SK-N-SH (cell line): ENCODE measurements at regions of chr6 and their contacts with region 1.

Region 1: GRCh38 chr6:31795616-31796298 is at the start of gene VARS1:
- DNase-seq: peak; percentile 98
- H3K4me3 ChIP-seq: peak within 1 kb of the TSS; percentile 80 to 82
- H3K27ac ChIP-seq: peak within 1 kb of the TSS; percentile 72 to 96
- H3K4me1 ChIP-seq: peaks cover 3 to 12% of the 10 kb centered on the region in 2 experiments; a peak in 3 of 4 replicates
- H3K27me3 ChIP-seq: no peaks in the 10 kb centered on the region
- CTCF ChIP-seq: peak; percentile 66
- EP300 ChIP-seq: no peak
- RAD21 ChIP-seq: peak; percentile 53
- polyA plus RNA-seq, gene VARS1: 22.2 and 35.1 TPM in 2 replicates

Region 2: DNA sequence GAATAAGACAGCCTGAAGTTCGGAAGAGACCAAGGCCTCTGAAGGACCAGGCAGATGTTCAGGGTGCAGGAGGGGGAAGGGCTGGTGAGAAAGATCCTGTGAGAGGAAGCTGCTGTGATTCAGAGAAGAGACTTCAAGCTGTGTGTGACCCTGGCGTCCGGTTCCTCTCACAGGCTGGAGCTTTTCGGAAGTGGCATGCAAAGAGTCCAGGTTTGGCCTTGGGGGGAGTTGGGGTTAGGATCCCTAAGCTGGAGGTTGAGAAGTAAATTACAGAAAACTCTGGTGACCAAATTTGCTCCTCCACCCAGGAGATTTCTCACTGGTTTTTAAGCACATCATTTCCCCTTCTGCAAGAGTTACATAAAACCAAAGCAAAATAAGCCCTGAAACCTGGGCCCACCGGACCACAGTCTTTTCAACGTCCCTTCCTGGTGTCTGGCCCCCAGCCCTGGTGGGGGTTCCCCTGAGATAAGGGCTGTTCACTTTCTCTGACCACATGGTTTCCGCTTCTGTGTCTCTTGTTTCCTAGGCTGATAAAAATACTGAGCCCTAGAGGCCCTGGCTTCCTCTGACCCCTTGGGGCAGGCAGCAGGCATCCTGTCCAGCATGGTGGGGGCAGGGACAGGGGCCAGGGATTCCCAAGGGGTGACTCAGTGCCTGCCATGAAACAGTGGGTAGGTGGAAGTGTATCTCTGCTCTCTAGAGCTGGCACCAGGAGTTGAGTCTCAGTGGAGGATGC is 235.6 kb before region 1 on chr6:
- CTCF ChIA-PET with region 1: no interaction called
- POLR2A ChIA-PET with region 1: no interaction called
- DNase-seq: no peak
- H3K4me3 ChIP-seq: no peak overlapping the region
- H3K27ac ChIP-seq: peak overlapping the region; percentile 14 to 77; a peak in 3 of 4 replicates
- H3K4me1 ChIP-seq: peaks cover 0 to 20% of the 10 kb centered on the region in 2 experiments; a peak in 3 of 4 replicates
- H3K27me3 ChIP-seq: no peaks in the 10 kb centered on the region
- CTCF ChIP-seq: no peak
- EP300 ChIP-seq: peak in 1 of 2 experiments; percentile 20; a peak in 1 of 4 replicates
- RAD21 ChIP-seq: no peak

Region 3: GRCh38 chr6:31639449-31639861 is 156.3 kb before region 1 on chr6:
- CTCF ChIA-PET with region 1: no interaction called
- POLR2A ChIA-PET with region 1: no interaction called
- DNase-seq: no peak
- H3K4me3 ChIP-seq: no peak overlapping the region
- H3K27ac ChIP-seq: peak overlapping the region in 1 of 2 experiments; percentile 65; a peak in 2 of 4 replicates
- H3K4me1 ChIP-seq: no peaks in the 10 kb centered on the region
- H3K27me3 ChIP-seq: no peaks in the 10 kb centered on the region
- CTCF ChIP-seq: no peak
- EP300 ChIP-seq: no peak
- RAD21 ChIP-seq: no peak

Region 4: GRCh38 chr6:31739639-31740396 is 55.9 kb before region 1 on chr6 and contains the start of gene MSH5:
- CTCF ChIA-PET with region 1: interaction called, 10 read pairs
- POLR2A ChIA-PET with region 1: interaction called, 5 read pairs
- DNase-seq: peak; percentile 95
- H3K4me3 ChIP-seq: peak within 1 kb of the TSS; percentile 77 to 83
- H3K27ac ChIP-seq: peak within 1 kb of the TSS; percentile 75 to 88
- H3K4me1 ChIP-seq: peaks cover 15 to 24% of the 10 kb centered on the region in 2 experiments; a peak in 3 of 4 replicates
- H3K27me3 ChIP-seq: no peaks in the 10 kb centered on the region
- CTCF ChIP-seq: no peak
- EP300 ChIP-seq: no peak
- RAD21 ChIP-seq: no peak
- polyA plus RNA-seq, gene MSH5: 16.0 and 19.5 TPM in 2 replicates

Region 5: DNA sequence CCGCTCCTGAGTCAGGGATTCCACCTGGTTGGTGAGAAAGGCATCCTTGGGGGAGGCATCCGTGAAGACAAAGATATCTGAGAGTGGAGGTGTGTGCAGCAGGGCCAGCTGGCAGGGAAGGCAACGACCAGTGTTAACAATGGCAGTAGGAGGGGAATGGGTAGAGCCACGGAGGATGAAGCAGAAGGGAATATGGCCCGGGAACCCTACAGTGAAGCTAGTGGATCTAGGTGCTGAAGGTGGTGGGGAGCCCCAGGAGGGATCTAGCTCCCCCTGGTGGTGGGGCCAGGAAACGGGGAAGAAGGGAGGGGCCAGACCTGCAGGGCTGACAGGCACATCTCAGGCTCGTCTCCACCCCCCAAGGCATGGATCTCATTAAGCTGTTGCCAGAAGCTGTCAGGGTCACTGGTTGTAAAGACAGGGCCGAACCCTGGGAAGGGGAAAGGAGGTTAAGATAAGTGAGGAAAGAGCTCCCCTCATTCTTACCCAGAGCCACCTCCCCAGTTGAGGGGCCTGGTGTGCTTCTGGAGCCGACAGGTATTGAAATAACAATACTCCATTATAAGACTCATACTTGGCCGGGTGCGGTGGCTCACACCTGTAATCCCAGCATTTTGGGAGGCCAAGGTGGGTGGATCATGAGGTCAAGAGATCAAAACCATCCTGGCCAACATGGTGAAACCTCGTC is 25.9 kb before region 1 on chr6:
- CTCF ChIA-PET with region 1: interaction called, 62 read pairs
- POLR2A ChIA-PET with region 1: interaction called, 3 read pairs
- DNase-seq: peak; percentile 72
- H3K4me3 ChIP-seq: no peak overlapping the region
- H3K27ac ChIP-seq: no peak overlapping the region
- H3K4me1 ChIP-seq: peaks cover 0 to 8% of the 10 kb centered on the region in 2 experiments; a peak in 1 of 4 replicates
- H3K27me3 ChIP-seq: no peaks in the 10 kb centered on the region
- CTCF ChIP-seq: peak; percentile 66
- EP300 ChIP-seq: no peak
- RAD21 ChIP-seq: peak; percentile 20; the same call in 1 of the 2 replicates

Region 6: GRCh38 chr6:31776989-31777666 is 18.6 kb before region 1 on chr6 and contains the start of gene VWA7:
- CTCF ChIA-PET with region 1: interaction called, 62 read pairs
- POLR2A ChIA-PET with region 1: interaction called, 3 read pairs
- DNase-seq: peak; percentile 71
- H3K4me3 ChIP-seq: no peak within 1 kb of the TSS
- H3K27ac ChIP-seq: no peak within 1 kb of the TSS; a peak in 2 of 4 replicates
- H3K4me1 ChIP-seq: peaks cover 9 to 10% of the 10 kb centered on the region in 2 experiments; a peak in 2 of 4 replicates
- H3K27me3 ChIP-seq: no peaks in the 10 kb centered on the region
- CTCF ChIP-seq: no peak
- EP300 ChIP-seq: peak in 1 of 2 experiments; percentile 14; a peak in 1 of 4 replicates
- RAD21 ChIP-seq: no peak
- polyA plus RNA-seq, gene VWA7: 0.45 and 0.56 TPM in 2 replicates

Region 7: DNA sequence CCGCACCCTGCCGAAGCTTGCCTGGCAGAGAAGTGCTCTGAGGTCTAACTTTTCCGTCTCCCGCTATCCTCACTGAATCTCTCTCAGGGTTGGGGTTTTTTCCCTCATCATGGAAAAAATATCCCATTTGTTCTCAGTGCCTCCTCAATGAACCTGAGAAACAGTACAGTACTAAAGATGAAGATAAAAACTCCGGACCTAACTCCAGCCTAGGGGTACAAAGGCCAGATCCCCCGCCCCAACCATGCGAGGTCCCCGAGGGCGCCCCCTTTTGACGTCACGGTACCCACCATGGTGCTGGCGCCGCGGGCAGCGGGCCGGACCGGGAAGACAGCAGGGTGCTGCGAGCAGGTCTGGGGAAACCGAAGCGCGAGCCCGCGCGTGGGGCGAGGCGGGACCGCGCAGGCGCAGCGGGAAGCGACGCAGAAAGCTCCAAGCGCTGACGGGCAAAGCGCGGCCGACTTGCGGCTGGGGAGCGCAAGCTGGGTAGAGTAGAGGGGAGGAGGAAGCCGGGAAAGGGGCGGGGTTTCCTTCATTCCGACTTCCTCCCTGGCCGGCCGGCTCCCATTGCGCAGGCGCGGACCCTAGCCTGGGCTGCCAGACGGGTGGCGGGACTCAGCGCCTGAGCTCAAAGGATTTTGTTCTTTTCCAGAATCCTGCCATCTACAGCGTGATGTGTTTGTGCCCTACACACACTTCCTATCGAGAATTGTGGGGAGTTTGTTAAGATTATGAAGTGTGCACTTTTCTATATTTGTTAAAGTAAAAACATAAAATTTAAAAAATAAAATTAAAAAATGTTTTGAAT is 10.9 kb after region 1 on chr6 and contains the start of gene LSM2:
- CTCF ChIA-PET with region 1: interaction called, 37 read pairs
- POLR2A ChIA-PET with region 1: interaction called, 24 read pairs
- DNase-seq: peak; percentile 99
- H3K4me3 ChIP-seq: peak within 1 kb of the TSS; percentile 64 to 73
- H3K27ac ChIP-seq: peak within 1 kb of the TSS; percentile 79 to 80
- H3K4me1 ChIP-seq: peaks cover 5% of the 10 kb centered on the region in 2 experiments; a peak in 2 of 4 replicates
- H3K27me3 ChIP-seq: no peaks in the 10 kb centered on the region
- CTCF ChIP-seq: peak; percentile 46
- EP300 ChIP-seq: no peak
- RAD21 ChIP-seq: no peak
- polyA plus RNA-seq, gene LSM2: 47.8 and 79.1 TPM in 2 replicates

Region 8: DNA sequence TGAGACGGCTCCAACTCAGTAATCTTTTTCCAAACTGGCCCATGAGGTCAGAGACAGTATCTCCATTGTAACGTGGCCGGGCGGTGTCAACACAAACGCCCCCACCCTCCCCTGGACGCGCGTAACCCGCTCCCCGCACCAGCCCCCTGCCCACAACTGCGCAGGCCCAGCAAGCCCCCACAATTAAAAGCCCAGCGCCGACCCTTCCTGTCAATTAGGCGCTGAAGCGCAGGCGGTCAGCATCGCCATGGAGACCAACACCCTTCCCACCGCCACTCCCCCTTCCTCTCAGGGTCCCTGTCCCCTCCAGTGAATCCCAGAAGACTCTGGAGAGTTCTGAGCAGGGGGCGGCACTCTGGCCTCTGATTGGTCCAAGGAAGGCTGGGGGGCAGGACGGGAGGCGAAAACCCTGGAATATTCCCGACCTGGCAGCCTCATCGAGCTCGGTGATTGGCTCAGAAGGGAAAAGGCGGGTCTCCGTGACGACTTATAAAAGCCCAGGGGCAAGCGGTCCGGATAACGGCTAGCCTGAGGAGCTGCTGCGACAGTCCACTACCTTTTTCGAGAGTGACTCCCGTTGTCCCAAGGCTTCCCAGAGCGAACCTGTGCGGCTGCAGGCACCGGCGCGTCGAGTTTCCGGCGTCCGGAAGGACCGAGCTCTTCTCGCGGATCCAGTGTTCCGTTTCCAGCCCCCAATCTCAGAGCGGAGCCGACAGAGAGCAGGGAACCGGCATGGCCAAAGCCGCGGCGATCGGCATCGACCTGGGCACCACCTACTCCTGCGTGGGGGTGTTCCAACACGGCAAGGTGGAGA is 19.5 kb after region 1 on chr6 and contains the starts of genes HSPA1A and HSPA1L:
- CTCF ChIA-PET with region 1: interaction called, 13 read pairs
- POLR2A ChIA-PET with region 1: interaction called, 7 read pairs
- DNase-seq: peak; percentile 94
- H3K4me3 ChIP-seq: peak within 1 kb of the TSS; percentile 62 to 79
- H3K27ac ChIP-seq: peak within 1 kb of the TSS; percentile 98
- H3K4me1 ChIP-seq: peaks cover 4 to 6% of the 10 kb centered on the region in 2 experiments; a peak in 2 of 4 replicates
- H3K27me3 ChIP-seq: no peaks in the 10 kb centered on the region
- CTCF ChIP-seq: no peak
- EP300 ChIP-seq: peak in 1 of 2 experiments; percentile 98; a peak in 2 of 4 replicates
- RAD21 ChIP-seq: no peak
- polyA plus RNA-seq, gene HSPA1A: 71.1 and 119 TPM in 2 replicates
- polyA plus RNA-seq, gene HSPA1L: 0.69 and 0.83 TPM in 2 replicates

Region 9: GRCh38 chr6:31827286-31828079 is 31.7 kb after region 1 on chr6 and contains the start of gene HSPA1B:
- CTCF ChIA-PET with region 1: interaction called, 15 read pairs
- POLR2A ChIA-PET with region 1: interaction called, 5 read pairs
- DNase-seq: peak; percentile 87
- H3K4me3 ChIP-seq: peak within 1 kb of the TSS; percentile 54 to 62
- H3K27ac ChIP-seq: peak within 1 kb of the TSS; percentile 86 to 90
- H3K4me1 ChIP-seq: peaks cover 7 to 10% of the 10 kb centered on the region in 2 experiments; a peak in 2 of 4 replicates
- H3K27me3 ChIP-seq: no peaks in the 10 kb centered on the region
- CTCF ChIP-seq: no peak
- EP300 ChIP-seq: peak in 1 of 2 experiments; percentile 91; a peak in 2 of 4 replicates
- RAD21 ChIP-seq: no peak
- polyA plus RNA-seq, gene HSPA1B: 52.4 and 96.3 TPM in 2 replicates

Region 10: GRCh38 chr6:31851485-31851832 is 55.7 kb after region 1 on chr6:
- CTCF ChIA-PET with region 1: no interaction called
- POLR2A ChIA-PET with region 1: no interaction called
- DNase-seq: no peak
- H3K4me3 ChIP-seq: no peak overlapping the region
- H3K27ac ChIP-seq: no peak overlapping the region
- H3K4me1 ChIP-seq: no peaks in the 10 kb centered on the region
- H3K27me3 ChIP-seq: no peaks in the 10 kb centered on the region
- CTCF ChIP-seq: no peak
- EP300 ChIP-seq: no peak
- RAD21 ChIP-seq: no peak

Region 11: DNA sequence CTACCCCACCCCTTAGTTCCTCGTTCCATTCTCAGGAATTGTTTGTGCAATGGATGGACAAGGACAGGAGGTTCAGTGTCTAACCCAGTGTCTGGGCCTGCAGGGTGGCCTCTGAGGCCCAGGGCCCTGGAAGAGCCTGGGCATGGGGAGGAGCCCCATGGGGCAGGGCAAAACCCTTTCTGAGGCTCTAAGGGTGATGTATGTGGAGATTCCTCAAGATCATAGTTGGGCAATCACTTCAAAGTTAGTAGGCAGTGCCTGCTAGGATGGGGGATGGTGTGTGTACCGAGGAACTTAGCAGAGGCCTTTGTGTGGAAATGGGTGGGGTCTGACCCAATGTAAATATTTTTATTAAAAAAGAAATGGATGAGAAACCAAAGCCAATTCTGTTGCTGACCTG is 125.1 kb after region 1 on chr6:
- CTCF ChIA-PET with region 1: no interaction called
- POLR2A ChIA-PET with region 1: no interaction called
- DNase-seq: no peak
- H3K4me3 ChIP-seq: no peak overlapping the region
- H3K27ac ChIP-seq: no peak overlapping the region
- H3K4me1 ChIP-seq: no peaks in the 10 kb centered on the region
- H3K27me3 ChIP-seq: no peaks in the 10 kb centered on the region
- CTCF ChIP-seq: no peak
- EP300 ChIP-seq: no peak
- RAD21 ChIP-seq: no peak